ENCODE measurements at regions of chr3 and their contacts with region 1.

Region 1: DNA sequence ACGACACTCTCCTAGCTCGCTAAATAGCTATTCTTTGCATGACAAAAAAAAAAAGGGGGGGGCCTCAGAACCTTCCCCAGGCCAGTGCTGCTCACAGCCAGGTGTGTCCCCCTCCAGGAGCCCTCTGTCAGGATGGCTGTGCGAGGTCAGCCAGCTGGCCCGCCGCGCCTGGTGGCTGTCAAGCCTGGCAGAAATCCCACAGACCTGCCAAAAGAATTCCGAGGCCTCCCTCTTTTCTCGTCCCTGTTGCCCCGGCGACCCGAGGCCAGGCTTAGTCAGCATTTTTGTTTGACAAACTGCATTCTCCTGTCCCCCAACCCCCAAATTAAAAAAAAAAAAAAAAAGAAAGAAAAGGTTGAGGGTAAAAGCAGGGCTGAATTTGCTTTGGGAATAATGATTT is 61.9 kb downstream of the TM4SF4 start:
- DNase-seq: no peak
- H3K4me3 ChIP-seq: no peak overlapping the region
- H3K27ac ChIP-seq: no peak overlapping the region
- H3K27me3 ChIP-seq: no peaks in the 10 kb centered on the region
- CTCF ChIP-seq: no peak

Region 2: DNA sequence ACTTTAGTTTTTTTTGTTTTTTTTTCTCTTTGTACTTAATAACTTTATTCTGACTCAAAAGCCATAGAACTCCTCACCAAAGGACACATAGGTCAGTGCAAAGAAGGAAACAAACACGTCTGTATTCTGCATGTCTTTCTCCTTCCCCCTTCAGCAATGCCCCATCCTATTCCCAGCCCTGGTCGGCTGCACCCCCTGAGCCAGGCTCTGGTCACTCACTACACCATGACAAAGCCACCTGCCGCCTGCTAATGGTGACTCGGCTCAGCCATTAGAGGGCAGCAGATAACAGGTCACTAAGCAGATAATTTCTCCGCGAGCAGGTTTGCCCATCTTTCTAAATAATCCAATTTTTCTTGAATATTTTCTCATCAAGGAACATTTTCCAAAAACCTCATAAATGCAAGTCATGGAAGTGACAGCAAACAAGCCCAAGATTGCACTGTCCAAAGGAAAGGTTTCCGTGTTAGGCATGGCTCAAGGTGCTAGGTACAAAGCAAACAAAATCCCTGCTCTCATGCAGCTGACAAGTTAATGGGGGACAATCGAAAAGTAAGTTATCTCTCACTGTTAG is 24.1 kb before region 1 on chr3:
- CTCF ChIA-PET with region 1: interaction called, 10 read pairs
- POLR2A ChIA-PET with region 1: no interaction called
- DNase-seq: no peak
- H3K4me3 ChIP-seq: no peak overlapping the region
- H3K27ac ChIP-seq: no peak overlapping the region
- H3K27me3 ChIP-seq: no peaks in the 10 kb centered on the region
- CTCF ChIP-seq: peak; percentile 79

Region 3: GRCh38 chr3:149567381-149567780 is 31.0 kb after region 1 on chr3:
- CTCF ChIA-PET with region 1: interaction called, 21 read pairs
- POLR2A ChIA-PET with region 1: interaction called, 3 read pairs
- DNase-seq: no peak
- H3K4me3 ChIP-seq: no peak overlapping the region
- H3K27ac ChIP-seq: no peak overlapping the region
- H3K27me3 ChIP-seq: no peaks in the 10 kb centered on the region
- CTCF ChIP-seq: no peak

Region 4: DNA sequence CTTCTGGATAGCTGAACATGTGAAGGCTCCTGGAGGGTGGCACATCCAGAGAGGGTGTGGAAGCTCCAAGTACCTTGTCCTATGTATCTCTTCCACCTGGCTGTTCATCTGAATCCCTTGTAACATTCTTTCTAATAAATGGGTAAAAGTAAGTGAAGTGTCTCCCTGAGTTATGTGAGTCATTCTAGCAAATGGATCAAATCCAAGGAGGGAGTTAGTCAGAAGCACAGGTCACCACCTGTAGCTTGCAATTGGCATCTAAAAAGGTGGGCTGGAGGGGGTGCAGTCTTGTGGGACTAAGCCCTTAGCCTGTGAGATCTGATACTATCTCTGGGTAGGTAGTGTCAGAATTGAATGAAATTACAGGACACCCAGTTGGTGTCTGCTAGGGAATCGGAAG is 50.4 kb after region 1 on chr3:
- CTCF ChIA-PET with region 1: interaction called, 10 read pairs
- POLR2A ChIA-PET with region 1: no interaction called
- DNase-seq: no peak
- H3K4me3 ChIP-seq: no peak overlapping the region
- H3K27ac ChIP-seq: no peak overlapping the region
- H3K27me3 ChIP-seq: no peaks in the 10 kb centered on the region
- CTCF ChIP-seq: no peak

Region 5: GRCh38 chr3:149752051-149752787 is 215.8 kb after region 1 on chr3 and contains the start of gene COMMD2:
- CTCF ChIA-PET with region 1: interaction called, 16 read pairs
- POLR2A ChIA-PET with region 1: no interaction called
- DNase-seq: peak; percentile 52
- H3K4me3 ChIP-seq: peak within 1 kb of the TSS; percentile 93
- H3K27ac ChIP-seq: peak within 1 kb of the TSS; percentile 58
- H3K27me3 ChIP-seq: peaks cover 4% of the 10 kb centered on the region
- CTCF ChIP-seq: peak; percentile 27
- polyA plus RNA-seq, gene COMMD2: 43.5 and 56.0 TPM in 2 replicates

Region 6: GRCh38 chr3:149765762-149766334 is 229.4 kb after region 1 on chr3:
- CTCF ChIA-PET with region 1: interaction called, 11 read pairs
- POLR2A ChIA-PET with region 1: no interaction called
- DNase-seq: no peak
- H3K4me3 ChIP-seq: no peak overlapping the region
- H3K27ac ChIP-seq: no peak overlapping the region
- H3K27me3 ChIP-seq: peaks cover 19% of the 10 kb centered on the region
- CTCF ChIP-seq: peak; percentile 68